ENCODE measurements at regions of chr5 and their contacts with region 1.

Region 1: DNA sequence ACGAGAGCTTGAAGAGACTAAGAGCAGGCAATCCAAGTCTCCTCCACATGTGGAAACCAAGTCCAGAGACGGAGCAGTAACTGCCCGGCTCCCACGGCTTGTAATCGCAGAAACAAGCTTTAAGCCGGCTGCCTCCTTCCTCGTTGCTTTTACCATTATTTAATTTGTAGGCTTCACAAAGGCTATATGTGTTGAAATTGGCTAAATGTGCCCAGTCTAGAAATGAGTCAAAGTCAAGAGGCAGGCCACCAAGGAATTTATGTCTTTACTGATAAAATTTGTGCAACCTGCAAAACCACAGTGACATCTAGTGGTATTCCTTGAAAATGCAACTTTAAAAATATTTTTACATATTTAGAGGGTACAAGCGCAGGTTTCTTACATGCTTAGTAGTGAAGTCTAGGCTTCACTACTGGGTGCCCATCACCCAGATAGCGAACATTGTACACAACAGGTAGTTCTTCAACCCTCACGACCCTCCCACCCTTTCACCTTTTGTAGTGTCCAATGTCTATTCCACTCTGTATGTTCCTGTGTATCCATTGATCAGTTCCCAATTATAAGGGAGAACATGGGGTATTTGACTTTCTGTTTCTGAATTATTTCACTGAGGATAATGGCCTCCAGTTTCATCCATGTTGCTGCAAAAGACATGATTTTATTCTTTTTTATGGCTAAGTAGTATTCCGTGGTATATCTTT is 33.5 kb upstream of the EBF1 start:
- DNase-seq: no peak
- H3K4me3 Mint-ChIP-seq: no peak overlapping the region
- H3K27ac Mint-ChIP-seq: no peak overlapping the region
- H3K4me1 Mint-ChIP-seq: no peaks in the 10 kb centered on the region
- H3K27me3 Mint-ChIP-seq: peaks cover 1% of the 10 kb centered on the region

Region 2: DNA sequence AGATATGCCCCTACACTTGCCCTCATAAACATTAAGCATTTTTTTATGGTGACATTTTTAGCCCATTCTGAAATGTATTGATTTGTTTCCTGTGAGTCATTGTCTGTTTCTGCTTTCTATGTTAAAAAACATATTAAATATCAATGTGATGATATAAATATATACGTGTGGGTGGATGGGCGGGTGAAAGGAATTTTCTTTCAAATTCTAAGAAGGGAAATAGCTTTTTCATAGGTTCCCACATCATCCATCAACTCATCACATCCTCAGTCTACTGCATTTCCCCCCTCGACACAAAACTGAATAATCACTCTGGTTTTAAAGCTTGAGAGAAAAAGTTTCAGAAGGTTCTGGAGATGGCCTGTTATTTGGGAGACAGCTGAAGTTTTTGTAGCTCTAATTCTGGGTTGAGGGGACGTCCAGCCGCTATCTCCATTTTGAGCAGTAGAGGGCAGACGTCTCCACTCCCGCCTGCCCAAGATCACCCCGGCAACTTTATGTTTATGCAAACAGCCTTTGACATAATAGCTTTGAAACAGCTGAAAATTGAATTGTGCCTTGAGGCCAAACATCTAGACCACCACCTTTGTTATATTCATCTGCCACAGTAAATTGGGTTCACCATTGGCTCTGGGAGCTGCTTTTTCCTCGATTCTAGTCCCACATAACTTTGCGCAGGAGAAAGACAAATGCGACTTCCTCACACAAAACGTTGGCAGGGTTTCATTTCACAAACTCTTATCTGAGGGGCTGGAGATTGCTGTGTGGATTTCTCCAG is 1058.0 kb before region 1 on chr5:
- CTCF ChIA-PET with region 1: interaction called, 21 read pairs
- POLR2A ChIA-PET with region 1: no interaction called
- intact Hi-C with region 1: loop called (anchors 10 kb)
- DNase-seq: peak; percentile 61
- H3K4me3 Mint-ChIP-seq: no peak overlapping the region
- H3K27ac Mint-ChIP-seq: no peak overlapping the region
- H3K4me1 Mint-ChIP-seq: peaks cover 5% of the 10 kb centered on the region
- H3K27me3 Mint-ChIP-seq: peaks cover 6% of the 10 kb centered on the region

Region 3: GRCh38 chr5:158174918-158175851 is 958.0 kb before region 1 on chr5:
- CTCF ChIA-PET with region 1: interaction called, 5 read pairs
- POLR2A ChIA-PET with region 1: no interaction called
- intact Hi-C with region 1: loop called (anchors 10 kb)
- DNase-seq: peak; percentile 61
- H3K4me3 Mint-ChIP-seq: no peak overlapping the region
- H3K27ac Mint-ChIP-seq: no peak overlapping the region
- H3K4me1 Mint-ChIP-seq: no peaks in the 10 kb centered on the region
- H3K27me3 Mint-ChIP-seq: no peaks in the 10 kb centered on the region

Region 4: DNA sequence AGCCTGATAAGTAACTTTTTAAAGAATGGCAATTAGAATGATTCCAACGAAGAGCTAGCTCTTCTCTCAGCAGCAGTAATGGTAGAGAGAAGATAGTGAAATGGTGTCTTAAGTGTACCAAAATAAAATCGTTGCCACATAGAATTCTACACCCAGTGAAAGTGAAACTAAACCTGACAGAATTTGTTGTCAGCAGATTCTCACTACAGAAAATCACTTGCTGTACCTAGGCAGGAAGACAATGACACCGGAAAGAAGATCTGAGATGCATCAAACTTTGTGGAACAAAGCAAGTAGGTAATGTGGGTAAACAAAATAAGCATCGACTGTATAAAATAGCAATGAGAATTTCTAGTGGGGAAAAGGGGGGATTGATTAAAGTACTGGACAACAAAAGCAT is 12.7 kb before region 1 on chr5:
- CTCF ChIA-PET with region 1: interaction called, 10 read pairs
- POLR2A ChIA-PET with region 1: no interaction called
- intact Hi-C with region 1: no loop called
- DNase-seq: no peak
- H3K4me3 Mint-ChIP-seq: peak overlapping the region; percentile 34
- H3K27ac Mint-ChIP-seq: peak overlapping the region; percentile 57
- H3K4me1 Mint-ChIP-seq: peaks cover 17% of the 10 kb centered on the region
- H3K27me3 Mint-ChIP-seq: no peaks in the 10 kb centered on the region

Region 5: GRCh38 chr5:159209438-159210305 is 76.5 kb after region 1 on chr5 and contains the start of gene RNF145:
- CTCF ChIA-PET with region 1: no interaction called
- POLR2A ChIA-PET with region 1: no interaction called
- intact Hi-C with region 1: no loop called
- DNase-seq: peak; percentile 94
- H3K4me3 Mint-ChIP-seq: peak within 1 kb of the TSS; percentile 99
- H3K27ac Mint-ChIP-seq: peak within 1 kb of the TSS; percentile 100
- H3K4me1 Mint-ChIP-seq: peaks cover 25% of the 10 kb centered on the region
- H3K27me3 Mint-ChIP-seq: no peaks in the 10 kb centered on the region
- total RNA-seq, gene RNF145: 91.4 to 92.6 TPM

Measured in activated CD4-positive, alpha-beta memory T cell treated with anti-CD3 and anti-CD28 coated beads for 36 hours (primary cell).